K562 (cell line): ENCODE measurements at regions of chr19 and their contacts with region 1.

Region 1: GRCh38 chr19:54137086-54137921 is at the start of gene CNOT3:
- DNase-seq: peak; percentile 94 to 100 (median 97)
- ATAC-seq: peak; percentile 95
- H3K4me3 ChIP-seq: peak within 1 kb of the TSS; percentile 93
- H3K27ac ChIP-seq: peak within 1 kb of the TSS; percentile 97
- H3K4me1 ChIP-seq: peaks cover 14 to 23% of the 10 kb centered on the region in 2 experiments; a peak in 4 of 5 replicates
- H3K27me3 ChIP-seq: no peaks in the 10 kb centered on the region
- CTCF ChIP-seq: peak in 1 of 3 experiments; percentile 7; a peak in 1 of 6 replicates
- EP300 ChIP-seq: no peak
- POLR2A ChIP-seq: peak; percentile 82
- RAD21 ChIP-seq: no peak
- polyA plus RNA-seq, gene CNOT3: 0.27 to 0.46 TPM

Region 2: GRCh38 chr19:54115109-54116063 is 21.9 kb before region 1 on chr19 and contains the starts of genes PRPF31 and TFPT:
- CTCF ChIA-PET with region 1: no interaction called
- POLR2A ChIA-PET with region 1: interaction called, 14 read pairs
- in situ Hi-C with region 1: no loop called
- intact Hi-C with region 1: loop called (anchors 1 kb)
- DNase-seq: peak; percentile 96 to 99 (median 98)
- ATAC-seq: peak; percentile 97
- H3K4me3 ChIP-seq: peak within 1 kb of the TSS; percentile 78
- H3K27ac ChIP-seq: peak within 1 kb of the TSS; percentile 93
- H3K4me1 ChIP-seq: peaks cover 3 to 15% of the 10 kb centered on the region in 2 experiments; a peak in 3 of 5 replicates
- H3K27me3 ChIP-seq: no peaks in the 10 kb centered on the region
- CTCF ChIP-seq: no peak
- EP300 ChIP-seq: peak; percentile 57
- POLR2A ChIP-seq: peak; percentile 95
- RAD21 ChIP-seq: no peak
- polyA plus RNA-seq, gene PRPF31: 5.8 to 12.9 TPM
- polyA plus RNA-seq, gene TFPT: 0.72 to 1.6 TPM

Region 3: GRCh38 chr19:54147676-54148075 is 10.4 kb after region 1 on chr19:
- CTCF ChIA-PET with region 1: no interaction called
- POLR2A ChIA-PET with region 1: interaction called, 29 read pairs
- in situ Hi-C with region 1: no loop called
- intact Hi-C with region 1: no loop called
- DNase-seq: no peak
- ATAC-seq: no peak; the same call in 2 of the 3 replicates
- H3K4me3 ChIP-seq: no peak overlapping the region
- H3K27ac ChIP-seq: no peak overlapping the region
- H3K4me1 ChIP-seq: peaks cover 0 to 10% of the 10 kb centered on the region in 2 experiments; a peak in 1 of 5 replicates
- H3K27me3 ChIP-seq: no peaks in the 10 kb centered on the region
- CTCF ChIP-seq: no peak
- EP300 ChIP-seq: no peak
- POLR2A ChIP-seq: no peak
- RAD21 ChIP-seq: no peak

Region 4: DNA sequence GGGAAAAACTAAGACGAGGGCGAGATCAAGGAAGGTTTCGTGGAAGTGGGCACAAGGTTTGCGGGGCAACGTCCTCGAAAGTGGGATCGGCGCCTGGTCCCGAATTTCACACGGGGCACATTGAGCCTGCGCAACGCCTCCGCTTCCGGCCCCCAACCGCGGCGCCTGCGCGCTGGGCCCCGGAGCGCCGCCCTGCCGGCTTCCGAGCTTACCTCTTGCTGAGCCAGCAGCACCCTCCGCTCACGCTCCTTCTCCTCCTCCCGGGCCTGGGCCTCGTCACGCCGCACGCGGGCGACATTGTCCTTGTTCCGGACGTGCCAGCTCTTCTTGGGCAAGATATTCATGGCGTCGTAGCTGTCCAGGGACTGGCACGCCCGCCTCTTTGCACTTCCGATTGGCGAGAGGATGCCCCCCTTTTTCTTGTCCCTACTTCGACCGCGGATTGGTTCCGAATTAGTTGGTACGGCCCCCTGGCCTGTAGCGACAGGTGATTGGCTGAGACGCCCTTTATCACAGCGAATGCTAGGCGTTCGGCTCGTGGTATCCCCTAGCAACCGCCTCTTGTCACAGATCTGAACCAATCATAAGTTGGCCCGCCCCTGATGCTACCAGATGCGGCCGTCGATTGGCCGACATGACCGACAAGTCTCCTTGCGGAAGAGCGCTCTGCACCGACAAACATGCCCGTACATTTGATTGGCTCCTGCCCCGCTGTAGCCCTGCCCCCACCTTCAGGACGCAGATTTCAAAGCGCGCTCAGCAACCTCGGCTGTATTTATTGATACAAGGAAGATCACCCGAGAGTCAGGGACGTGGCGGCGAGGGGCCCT is 22.3 kb after region 1 on chr19 and contains the start of gene LENG1:
- CTCF ChIA-PET with region 1: no interaction called
- POLR2A ChIA-PET with region 1: interaction called, 18 read pairs
- in situ Hi-C with region 1: no loop called
- intact Hi-C with region 1: loop called (anchors 1 kb)
- DNase-seq: peak; percentile 95 to 100 (median 98)
- ATAC-seq: peak; percentile 89
- H3K4me3 ChIP-seq: peak within 1 kb of the TSS; percentile 69
- H3K27ac ChIP-seq: peak within 1 kb of the TSS; percentile 93
- H3K4me1 ChIP-seq: peaks cover 21 to 42% of the 10 kb centered on the region in 2 experiments
- H3K27me3 ChIP-seq: no peaks in the 10 kb centered on the region
- CTCF ChIP-seq: peak; percentile 40 to 52 (median 45)
- EP300 ChIP-seq: no peak
- POLR2A ChIP-seq: peak; percentile 89
- RAD21 ChIP-seq: no peak
- polyA plus RNA-seq, gene LENG1: 0.30 to 0.77 TPM